Activated B cell treated with CpG ODN at 0.5 μM for 24 hours (primary cell): ENCODE measurements at regions of chr11 and their contacts with region 1.

Region 1: GRCh38 chr11:95531116-95531515 is 258.5 kb downstream of the FAM76B start:
- DNase-seq: no peak
- ATAC-seq: no peak
- H3K4me3 Mint-ChIP-seq: no peak overlapping the region
- H3K27ac Mint-ChIP-seq: no peak overlapping the region
- H3K4me1 Mint-ChIP-seq: no peaks in the 10 kb centered on the region
- H3K27me3 Mint-ChIP-seq: peaks cover 2% of the 10 kb centered on the region
- CTCF ChIP-seq: no peak

Region 2: GRCh38 chr11:95514416-95515110 is 16.6 kb before region 1 on chr11:
- CTCF ChIA-PET with region 1: no interaction called
- POLR2A ChIA-PET with region 1: no interaction called
- intact Hi-C with region 1: loop called (anchors 2 kb)
- DNase-seq: no peak
- ATAC-seq: no peak
- H3K4me3 Mint-ChIP-seq: no peak overlapping the region
- H3K27ac Mint-ChIP-seq: no peak overlapping the region
- H3K4me1 Mint-ChIP-seq: no peaks in the 10 kb centered on the region
- H3K27me3 Mint-ChIP-seq: no peaks in the 10 kb centered on the region
- CTCF ChIP-seq: no peak

Region 3: GRCh38 chr11:96257972-96258934 is 727.1 kb after region 1 on chr11:
- CTCF ChIA-PET with region 1: no interaction called
- POLR2A ChIA-PET with region 1: no interaction called
- intact Hi-C with region 1: no loop called
- DNase-seq: no peak
- ATAC-seq: peak; percentile 74
- H3K4me3 Mint-ChIP-seq: peak overlapping the region; percentile 75
- H3K27ac Mint-ChIP-seq: peak overlapping the region; percentile 99
- H3K4me1 Mint-ChIP-seq: peaks cover 85% of the 10 kb centered on the region
- H3K27me3 Mint-ChIP-seq: no peaks in the 10 kb centered on the region
- CTCF ChIP-seq: no peak